ENCODE measurements at regions of chr6 and their contacts with region 1.

Region 1: DNA sequence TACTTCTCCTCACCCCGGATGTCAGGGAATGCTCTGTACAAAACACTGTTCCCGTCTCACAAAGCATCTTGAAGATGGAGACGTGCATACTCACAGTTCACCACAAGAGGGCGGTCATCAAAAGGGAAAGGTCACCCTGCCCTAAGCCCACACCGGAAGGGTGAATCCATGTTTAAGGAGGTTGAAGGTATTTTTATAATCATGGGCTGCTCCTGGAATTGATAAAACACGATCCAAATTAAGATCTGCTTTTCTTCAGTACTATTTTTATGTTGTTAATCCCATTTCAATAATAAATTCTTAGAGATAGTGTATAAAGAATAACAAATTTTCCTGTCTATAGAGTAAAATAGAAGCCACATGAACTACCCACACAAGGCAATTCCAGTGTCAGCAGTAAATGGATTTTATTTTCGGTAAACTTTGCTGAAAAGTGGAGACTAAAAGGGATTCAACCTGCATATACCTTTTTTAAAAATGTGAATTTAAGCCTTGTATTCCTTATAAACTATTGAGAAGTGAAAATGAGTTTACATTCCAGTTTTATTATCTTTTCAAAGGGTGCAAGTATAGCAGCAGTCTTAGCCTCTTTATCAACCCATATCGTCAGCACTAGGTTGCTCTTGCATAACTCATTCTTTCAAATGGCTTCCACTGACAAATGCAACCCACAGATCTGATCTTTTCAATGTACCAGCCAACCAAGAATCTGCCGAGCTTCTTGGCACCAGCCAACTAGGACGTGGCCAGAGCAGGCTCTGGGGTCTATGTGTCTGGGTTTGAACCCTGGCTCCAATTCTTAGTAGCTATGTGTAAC is 79.7 kb upstream of the MBOAT1 start:
- DNase-seq: peak; percentile 80
- H3K4me3 ChIP-seq: no peak overlapping the region
- H3K27ac ChIP-seq: no peak overlapping the region
- H3K4me1 ChIP-seq: no peaks in the 10 kb centered on the region
- CTCF ChIP-seq: peak; percentile 96

Region 2: DNA sequence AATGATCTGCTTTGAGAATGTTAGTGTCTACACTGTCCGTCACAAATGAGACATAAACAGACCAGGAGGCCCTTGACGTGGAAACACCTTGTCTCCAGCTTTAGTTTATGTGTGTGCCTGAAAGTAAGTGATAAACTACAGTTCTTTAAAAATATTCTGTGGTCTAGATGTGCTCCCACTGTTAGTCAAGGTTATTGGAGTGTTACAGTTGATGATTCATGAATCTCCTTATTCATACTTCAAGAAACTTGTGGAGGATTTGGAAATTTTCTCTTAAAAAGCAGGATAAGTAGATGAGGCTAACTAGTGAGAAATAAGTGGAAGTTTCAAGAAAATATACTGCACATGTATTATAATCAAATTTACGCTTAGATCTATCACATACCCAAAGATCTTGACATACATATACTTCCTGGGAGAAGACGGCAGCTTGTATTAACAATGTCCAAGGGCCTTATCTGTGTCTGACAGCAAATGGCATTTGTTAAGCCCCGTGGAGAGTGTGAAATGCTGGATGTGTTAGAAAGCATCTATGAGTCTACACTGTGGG is 10.8 kb after region 1 on chr6:
- CTCF ChIA-PET with region 1: no interaction called
- POLR2A ChIA-PET with region 1: no interaction called
- intact Hi-C with region 1: no loop called
- DNase-seq: no peak
- H3K4me3 ChIP-seq: no peak overlapping the region
- H3K27ac ChIP-seq: no peak overlapping the region
- H3K4me1 ChIP-seq: no peaks in the 10 kb centered on the region
- CTCF ChIP-seq: no peak

Region 3: GRCh38 chr6:20534295-20535262 is 242.6 kb after region 1 on chr6 and contains the start of gene CDKAL1:
- CTCF ChIA-PET with region 1: no interaction called
- POLR2A ChIA-PET with region 1: interaction called, 3 read pairs
- intact Hi-C with region 1: loop called (anchors 1 kb)
- DNase-seq: peak; percentile 92
- H3K4me3 ChIP-seq: peak within 1 kb of the TSS; percentile 94
- H3K27ac ChIP-seq: peak within 1 kb of the TSS; percentile 65
- H3K4me1 ChIP-seq: peaks cover 14% of the 10 kb centered on the region
- CTCF ChIP-seq: no peak
- total RNA-seq, gene CDKAL1: 19.9 and 21.6 TPM in 2 replicates